Naive thymus-derived CD4-positive, alpha-beta T cell (primary cell): ENCODE measurements at regions of chr6 and their contacts with region 1.

Region 1: DNA sequence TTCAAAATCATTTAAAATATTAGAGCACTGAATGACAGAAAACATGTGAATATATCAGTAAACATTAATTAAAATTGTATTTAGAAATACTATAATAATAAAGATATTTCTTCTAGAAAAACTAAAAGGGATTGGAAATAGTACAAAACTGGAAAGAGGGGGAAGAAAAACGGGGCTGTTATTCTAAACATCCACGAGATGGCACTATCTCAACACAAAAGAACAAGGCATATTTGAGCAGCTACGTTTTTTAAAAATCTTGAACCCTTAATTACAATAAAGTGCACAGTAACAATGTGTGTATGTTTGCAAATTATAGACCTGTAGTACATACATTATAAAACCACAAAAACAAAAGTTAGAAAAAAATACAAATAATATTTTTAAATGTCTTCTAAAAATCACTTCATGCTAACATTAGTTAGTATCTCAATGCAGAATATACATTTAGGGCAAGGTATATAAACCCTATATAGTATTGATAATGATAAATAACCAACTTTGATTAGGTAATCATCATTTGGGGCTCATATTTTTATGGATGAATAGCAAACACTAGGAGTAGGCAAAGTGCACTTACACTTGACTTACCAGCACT is 42.5 kb upstream of the PNISR start:
- DNase-seq: peak in 5 of 9 donors; percentile 4 to 39 (median 26)
- ATAC-seq: no peak
- H3K4me3 ChIP-seq: no peak overlapping the region
- H3K4me3 Mint-ChIP-seq: no peak overlapping the region
- H3K27ac ChIP-seq: no peak overlapping the region
- H3K27ac Mint-ChIP-seq: no peak overlapping the region
- H3K4me1 ChIP-seq: no peaks in the 10 kb centered on the region
- H3K4me1 Mint-ChIP-seq: no peaks in the 10 kb centered on the region
- H3K27me3 ChIP-seq: no peaks in the 10 kb centered on the region
- H3K27me3 Mint-ChIP-seq: no peaks in the 10 kb centered on the region

Region 2: GRCh38 chr6:99603421-99604165 is 136.0 kb after region 1 on chr6:
- CTCF ChIA-PET with region 1: no interaction called
- POLR2A ChIA-PET with region 1: no interaction called
- intact Hi-C with region 1: loop called in 1 of 2 experiments (anchors 5 kb)
- DNase-seq: peak in 1 of 9 donors; percentile 48
- ATAC-seq: peak; percentile 35
- H3K4me3 ChIP-seq: peak overlapping the region; percentile 40
- H3K4me3 Mint-ChIP-seq: peak overlapping the region; percentile 35 to 75 (median 70)
- H3K27ac ChIP-seq: no peak overlapping the region
- H3K27ac Mint-ChIP-seq: no peak overlapping the region
- H3K4me1 ChIP-seq: peaks cover 18 to 28% of the 10 kb centered on the region in 2 donors
- H3K4me1 Mint-ChIP-seq: peaks cover 18 to 44% (median 27%) of the 10 kb centered on the region in 7 donors
- H3K27me3 ChIP-seq: peaks cover 45 to 47% of the 10 kb centered on the region in 2 donors
- H3K27me3 Mint-ChIP-seq: peaks cover 83 to 94% (median 85%) of the 10 kb centered on the region in 5 donors

Region 3: GRCh38 chr6:99790679-99791078 is 323.1 kb after region 1 on chr6:
- CTCF ChIA-PET with region 1: no interaction called
- POLR2A ChIA-PET with region 1: no interaction called
- intact Hi-C with region 1: loop called in 1 of 2 experiments (anchors 2 kb)
- DNase-seq: no peak
- ATAC-seq: no peak
- H3K4me3 ChIP-seq: no peak overlapping the region
- H3K4me3 Mint-ChIP-seq: no peak overlapping the region
- H3K27ac ChIP-seq: no peak overlapping the region
- H3K27ac Mint-ChIP-seq: no peak overlapping the region
- H3K4me1 ChIP-seq: no peaks in the 10 kb centered on the region
- H3K4me1 Mint-ChIP-seq: no peaks in the 10 kb centered on the region
- H3K27me3 ChIP-seq: no peaks in the 10 kb centered on the region
- H3K27me3 Mint-ChIP-seq: peaks cover 18 to 57% (median 29%) of the 10 kb centered on the region in 5 donors

Region 4: DNA sequence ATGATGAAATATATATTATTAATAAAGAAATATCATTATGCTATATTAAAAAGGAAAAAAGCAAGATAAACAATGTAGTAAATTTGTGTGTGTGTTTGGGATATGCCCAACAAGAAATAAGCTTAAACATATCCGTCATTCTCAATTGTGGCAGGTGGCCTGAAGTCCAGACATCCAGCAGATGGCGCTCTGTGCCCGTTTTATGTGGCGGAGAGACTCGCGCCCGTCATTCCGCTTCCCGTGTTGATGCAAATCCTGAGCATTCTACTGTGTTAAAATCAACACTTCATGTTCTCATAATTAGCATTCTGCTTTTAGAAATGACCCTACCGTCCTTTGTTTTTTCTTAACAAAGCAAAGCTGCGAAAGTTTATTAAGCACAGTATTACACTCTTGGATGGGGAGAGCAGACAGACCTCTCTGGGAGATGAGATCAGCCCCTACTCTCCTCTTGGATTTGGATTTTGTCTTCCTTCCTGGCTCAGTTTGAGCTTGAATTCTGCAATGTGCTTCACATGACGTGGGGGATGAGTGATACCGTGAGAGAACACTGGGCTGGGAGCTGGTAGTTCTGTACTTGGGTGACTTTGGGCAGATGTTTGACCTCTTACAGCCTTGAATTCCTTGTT is 400.6 kb after region 1 on chr6:
- CTCF ChIA-PET with region 1: interaction called, 3 read pairs
- POLR2A ChIA-PET with region 1: no interaction called
- intact Hi-C with region 1: loop called in 1 of 2 experiments (anchors 2 kb)
- DNase-seq: peak; percentile 20 to 66 (median 50)
- ATAC-seq: peak; percentile 70
- H3K4me3 ChIP-seq: no peak overlapping the region
- H3K4me3 Mint-ChIP-seq: peak overlapping the region in 4 of 10 donors; percentile 11 to 42 (median 12)
- H3K27ac ChIP-seq: no peak overlapping the region
- H3K27ac Mint-ChIP-seq: peak overlapping the region in 1 of 9 donors; percentile 18
- H3K4me1 ChIP-seq: no peaks in the 10 kb centered on the region
- H3K4me1 Mint-ChIP-seq: peaks cover 0 to 9% (median 5%) of the 10 kb centered on the region in 7 donors
- H3K27me3 ChIP-seq: peaks cover 0 to 4% of the 10 kb centered on the region in 2 donors
- H3K27me3 Mint-ChIP-seq: peaks cover 20 to 38% (median 25%) of the 10 kb centered on the region in 5 donors

Region 5: GRCh38 chr6:100001915-100002388 is 534.3 kb after region 1 on chr6:
- CTCF ChIA-PET with region 1: no interaction called
- POLR2A ChIA-PET with region 1: no interaction called
- intact Hi-C with region 1: loop called in 1 of 2 experiments (anchors 2 kb)
- DNase-seq: peak in 6 of 9 donors; percentile 9 to 33 (median 22)
- ATAC-seq: peak; percentile 70
- H3K4me3 ChIP-seq: no peak overlapping the region
- H3K4me3 Mint-ChIP-seq: no peak overlapping the region
- H3K27ac ChIP-seq: no peak overlapping the region
- H3K27ac Mint-ChIP-seq: no peak overlapping the region
- H3K4me1 ChIP-seq: no peaks in the 10 kb centered on the region
- H3K4me1 Mint-ChIP-seq: no peaks in the 10 kb centered on the region
- H3K27me3 ChIP-seq: no peaks in the 10 kb centered on the region
- H3K27me3 Mint-ChIP-seq: peaks cover 19 to 29% (median 23%) of the 10 kb centered on the region in 5 donors

Region 6: DNA sequence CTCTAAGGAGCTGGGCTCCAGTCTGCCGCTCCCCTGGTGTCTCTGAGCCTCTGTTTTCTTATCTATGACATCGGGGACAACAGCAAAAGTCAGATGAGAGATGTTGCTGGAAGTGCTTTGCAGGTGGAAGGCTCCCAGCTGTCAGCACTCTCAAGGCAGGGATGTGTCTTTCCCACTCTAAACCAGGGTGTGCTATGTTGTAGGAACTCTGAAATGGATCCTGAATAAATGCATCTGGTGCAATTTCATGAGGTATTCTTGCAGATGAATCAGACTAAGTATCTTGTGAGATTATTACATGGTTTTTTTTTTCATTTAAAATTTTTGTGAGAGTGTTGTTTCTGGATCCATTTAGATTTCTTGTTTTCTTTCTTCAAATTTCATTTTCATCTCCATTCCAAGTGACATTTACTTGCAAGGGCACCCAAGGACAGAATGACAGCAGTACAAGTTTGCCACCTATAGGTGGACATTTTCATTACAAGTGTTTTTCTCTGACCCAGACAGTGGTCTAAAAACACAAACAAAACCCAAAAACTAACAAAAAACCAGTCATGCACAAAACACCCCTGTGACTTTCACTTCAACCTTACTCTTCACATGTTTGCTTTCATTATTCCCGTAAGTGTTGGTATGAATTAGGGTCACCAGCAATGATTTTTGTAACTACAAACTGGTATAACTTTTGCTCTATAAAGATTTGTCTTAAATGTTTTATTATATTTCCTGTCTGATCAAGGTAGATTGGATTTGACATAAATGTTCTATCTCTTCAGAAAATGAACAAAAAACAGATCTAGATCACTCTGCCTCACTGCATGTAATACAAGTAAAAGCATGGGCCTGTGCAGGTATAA is 1011.8 kb after region 1 on chr6:
- CTCF ChIA-PET with region 1: no interaction called
- POLR2A ChIA-PET with region 1: no interaction called
- intact Hi-C with region 1: loop called in 1 of 2 experiments (anchors 5 kb)
- DNase-seq: no peak
- ATAC-seq: peak; percentile 34
- H3K4me3 ChIP-seq: no peak overlapping the region
- H3K4me3 Mint-ChIP-seq: no peak overlapping the region
- H3K27ac ChIP-seq: no peak overlapping the region
- H3K27ac Mint-ChIP-seq: no peak overlapping the region
- H3K4me1 ChIP-seq: no peaks in the 10 kb centered on the region
- H3K4me1 Mint-ChIP-seq: no peaks in the 10 kb centered on the region
- H3K27me3 ChIP-seq: no peaks in the 10 kb centered on the region
- H3K27me3 Mint-ChIP-seq: peaks cover 26 to 37% (median 28%) of the 10 kb centered on the region in 5 donors